CD4-positive, alpha-beta T cell (primary cell): ENCODE measurements at regions of chr14 and their contacts with region 1.

Region 1: GRCh38 chr14:24299255-24300195 is at the starts of genes DHRS1 and NOP9:
- DNase-seq: peak; percentile 86 to 98 (median 92)
- ATAC-seq: peak; percentile 77
- H3K4me3 ChIP-seq: peak within 1 kb of the TSS; percentile 87
- H3K4me3 Mint-ChIP-seq: peak within 1 kb of the TSS; percentile 99
- H3K27ac ChIP-seq: peak within 1 kb of the TSS; percentile 81 to 87
- H3K27ac Mint-ChIP-seq: peak within 1 kb of the TSS; percentile 98
- H3K4me1 ChIP-seq: peaks cover 56% of the 10 kb centered on the region
- H3K4me1 Mint-ChIP-seq: peaks cover 64% of the 10 kb centered on the region
- H3K27me3 ChIP-seq: no peaks in the 10 kb centered on the region
- H3K27me3 Mint-ChIP-seq: no peaks in the 10 kb centered on the region
- CTCF ChIP-seq: no peak
- total RNA-seq, gene DHRS1: 21.5 to 23.5 TPM
- total RNA-seq, gene NOP9: 25.9 to 27.5 TPM

Region 2: DNA sequence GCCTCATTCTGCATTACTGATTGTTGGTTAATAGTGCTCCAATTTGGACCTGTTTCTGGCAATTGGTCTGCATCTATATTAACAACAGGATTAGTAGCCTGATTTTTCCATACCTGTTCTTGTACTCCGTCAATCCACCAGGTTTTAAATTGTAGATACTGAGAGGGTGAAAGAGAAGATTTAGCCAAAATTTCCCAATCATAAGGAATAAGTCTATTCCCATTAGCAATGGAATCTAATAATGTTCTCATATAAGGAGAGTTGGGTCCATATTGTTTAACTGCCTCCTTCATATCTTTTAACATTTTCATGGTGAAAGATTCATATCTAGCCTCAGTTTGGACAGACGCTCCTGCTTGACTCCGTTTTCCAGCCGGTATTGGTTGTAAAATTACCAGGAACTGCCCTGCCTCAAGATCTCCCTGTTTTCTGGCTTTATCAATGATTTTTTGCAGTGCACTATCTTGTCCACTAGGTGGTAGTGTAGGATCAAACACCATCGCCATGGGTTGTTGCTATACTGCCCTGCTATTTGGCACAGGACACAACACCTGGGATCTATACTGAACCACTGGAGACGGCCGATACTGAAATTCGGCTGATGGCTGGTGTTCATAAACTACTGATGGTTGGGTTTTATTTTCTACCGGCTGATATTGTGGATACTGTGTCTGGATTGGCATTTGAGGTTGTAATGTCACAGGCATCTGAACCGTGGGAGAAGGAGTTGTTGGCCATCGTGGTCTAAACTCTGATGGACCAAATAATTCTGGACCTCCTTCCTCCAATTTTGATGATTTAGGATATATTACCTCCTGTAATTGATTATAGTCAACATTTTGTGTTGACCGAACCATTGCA is 285.6 kb before region 1 on chr14:
- CTCF ChIA-PET with region 1: no interaction called
- POLR2A ChIA-PET with region 1: no interaction called
- intact Hi-C with region 1: loop called (anchors 1 to 5 kb)
- DNase-seq: peak in 12 of 14 experiments; percentile 9 to 85 (median 32)
- ATAC-seq: peak; percentile 98
- H3K4me3 ChIP-seq: no peak overlapping the region
- H3K4me3 Mint-ChIP-seq: no peak overlapping the region
- H3K27ac ChIP-seq: no peak overlapping the region
- H3K27ac Mint-ChIP-seq: no peak overlapping the region
- H3K4me1 ChIP-seq: peaks cover 11% of the 10 kb centered on the region
- H3K4me1 Mint-ChIP-seq: peaks cover 25% of the 10 kb centered on the region
- H3K27me3 ChIP-seq: no peaks in the 10 kb centered on the region
- H3K27me3 Mint-ChIP-seq: no peaks in the 10 kb centered on the region
- CTCF ChIP-seq: peak; percentile 92

Region 3: DNA sequence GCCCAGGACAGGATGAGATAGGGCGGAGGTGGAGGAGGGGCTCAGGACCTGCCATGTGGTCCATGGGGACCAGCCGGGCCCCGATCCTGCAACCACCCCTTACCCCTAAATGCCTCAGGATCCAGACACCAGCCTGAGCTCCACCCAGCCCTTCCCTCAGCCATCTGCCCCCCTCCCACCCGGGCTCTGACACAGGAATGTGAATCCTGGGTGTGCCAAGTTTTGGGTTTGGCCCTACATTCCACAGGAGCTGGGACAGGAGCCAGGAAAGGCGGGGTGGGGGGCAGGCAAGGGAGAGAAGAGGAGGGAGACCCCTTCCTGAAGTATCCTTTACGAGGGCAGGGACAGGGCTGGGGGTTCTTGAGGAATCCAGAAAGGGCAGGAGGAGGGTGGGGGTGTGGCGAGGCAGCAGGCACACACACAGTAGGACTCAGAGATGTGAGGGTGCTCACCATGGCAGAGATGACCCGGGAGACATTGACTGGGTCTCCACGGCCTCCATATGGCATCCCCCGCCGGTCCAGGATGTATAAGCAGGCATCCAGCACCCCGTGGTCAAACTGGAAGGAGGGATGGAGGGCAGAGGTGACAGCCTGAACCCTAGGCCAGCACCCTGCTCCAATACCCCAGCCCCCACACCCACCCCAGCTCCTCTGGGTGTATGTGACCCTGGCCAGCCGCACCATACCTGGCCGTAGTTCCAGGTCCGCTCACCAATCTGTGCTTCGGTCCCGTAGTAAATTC is 40.1 kb before region 1 on chr14:
- CTCF ChIA-PET with region 1: no interaction called
- POLR2A ChIA-PET with region 1: no interaction called
- intact Hi-C with region 1: no loop called
- DNase-seq: no peak
- ATAC-seq: no peak
- H3K4me3 ChIP-seq: no peak overlapping the region
- H3K4me3 Mint-ChIP-seq: no peak overlapping the region
- H3K27ac ChIP-seq: no peak overlapping the region
- H3K27ac Mint-ChIP-seq: no peak overlapping the region
- H3K4me1 ChIP-seq: no peaks in the 10 kb centered on the region
- H3K4me1 Mint-ChIP-seq: no peaks in the 10 kb centered on the region
- H3K27me3 ChIP-seq: no peaks in the 10 kb centered on the region
- H3K27me3 Mint-ChIP-seq: no peaks in the 10 kb centered on the region
- CTCF ChIP-seq: no peak

Region 4: DNA sequence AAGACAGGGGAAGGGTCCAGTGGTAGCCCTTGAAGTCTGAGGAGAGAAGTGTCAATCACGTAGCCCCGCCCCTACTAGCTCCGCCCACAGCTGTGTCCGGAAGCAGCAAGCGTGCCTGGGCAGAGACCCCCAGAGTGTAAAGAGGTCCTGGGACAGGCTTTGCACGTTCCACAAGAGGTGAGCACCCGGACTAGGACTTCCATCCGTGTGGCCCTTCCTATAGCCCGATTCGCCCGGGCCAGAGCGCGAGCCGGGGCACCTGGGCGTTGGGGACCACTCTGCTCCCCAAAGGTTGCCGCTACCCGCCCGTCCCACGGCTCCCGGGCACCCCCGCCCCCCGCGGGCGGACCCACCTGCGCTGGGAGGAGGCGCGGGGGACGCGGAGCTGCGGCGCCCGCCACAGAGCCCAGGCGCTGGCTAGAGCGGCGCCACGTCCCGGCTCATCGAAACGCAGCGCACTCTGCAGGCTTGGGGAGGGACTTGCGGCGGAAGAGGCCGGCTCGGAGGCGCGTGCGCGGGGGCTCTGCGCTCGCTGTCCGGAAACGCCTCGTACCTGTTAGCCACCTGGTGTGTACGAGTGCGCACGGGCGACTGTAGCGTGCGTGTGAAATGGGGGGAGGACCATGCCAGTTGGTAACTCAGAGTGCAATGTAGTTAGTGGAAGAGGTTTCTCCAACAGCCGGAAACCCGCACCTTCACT is 28.2 kb before region 1 on chr14 and contains the start of gene RABGGTA:
- CTCF ChIA-PET with region 1: interaction called, 18 read pairs
- POLR2A ChIA-PET with region 1: interaction called, 22 read pairs
- intact Hi-C with region 1: loop called (anchors 1 kb)
- DNase-seq: peak; percentile 84 to 99 (median 92)
- ATAC-seq: peak; percentile 83
- H3K4me3 ChIP-seq: peak within 1 kb of the TSS; percentile 86
- H3K4me3 Mint-ChIP-seq: peak within 1 kb of the TSS; percentile 96
- H3K27ac ChIP-seq: peak within 1 kb of the TSS; percentile 92 to 95
- H3K27ac Mint-ChIP-seq: peak within 1 kb of the TSS; percentile 97
- H3K4me1 ChIP-seq: peaks cover 43% of the 10 kb centered on the region
- H3K4me1 Mint-ChIP-seq: peaks cover 40% of the 10 kb centered on the region
- H3K27me3 ChIP-seq: no peaks in the 10 kb centered on the region
- H3K27me3 Mint-ChIP-seq: no peaks in the 10 kb centered on the region
- CTCF ChIP-seq: peak; percentile 75
- total RNA-seq, gene RABGGTA: 52.3 to 55.2 TPM

Region 5: DNA sequence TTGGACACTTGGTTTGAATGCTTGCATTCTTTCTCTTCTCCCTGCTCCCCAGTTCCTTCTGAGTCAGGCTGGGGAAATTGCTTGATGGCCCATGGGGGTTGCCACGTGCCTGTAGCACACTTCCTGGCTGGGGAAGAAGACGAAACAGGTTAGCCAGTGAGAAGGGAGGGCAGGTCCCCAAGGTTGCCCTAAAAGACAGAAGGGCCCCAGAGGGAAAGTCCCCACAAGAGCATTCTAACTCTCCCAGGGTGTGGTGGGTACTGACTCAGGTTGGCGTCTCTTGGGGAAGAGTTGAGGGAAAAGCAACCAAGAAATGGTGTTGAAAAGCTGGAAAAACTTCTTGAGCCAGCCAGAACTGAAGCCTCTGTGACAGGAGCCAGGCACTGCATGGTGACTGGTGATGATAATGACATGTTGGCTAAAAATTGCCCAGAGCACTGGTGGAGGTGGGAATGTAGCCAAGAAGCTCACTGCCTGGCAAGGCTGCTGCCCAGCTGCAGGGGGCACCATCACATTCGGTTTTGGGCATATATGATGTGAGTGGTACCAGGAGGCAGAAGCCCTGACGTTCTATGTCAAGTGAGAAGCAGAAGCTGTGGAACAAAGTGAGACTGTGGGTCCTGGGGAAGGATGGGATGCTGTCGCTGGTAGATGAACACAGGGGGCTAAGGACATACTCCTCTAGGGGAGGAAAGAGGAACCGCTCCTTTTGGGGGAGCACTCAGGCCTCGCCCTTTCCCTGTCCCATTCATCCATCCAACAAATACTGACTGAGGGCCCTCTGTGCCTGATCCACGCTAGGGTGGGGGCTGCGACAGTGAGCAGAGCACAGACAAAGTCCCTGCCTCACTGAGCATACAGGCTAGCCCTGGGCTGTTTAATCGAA is 20.0 kb before region 1 on chr14:
- CTCF ChIA-PET with region 1: interaction called, 24 read pairs
- POLR2A ChIA-PET with region 1: interaction called, 3 read pairs
- intact Hi-C with region 1: loop called in 1 of 2 experiments (anchors 1 kb)
- DNase-seq: peak in 12 of 14 experiments; percentile 23 to 87 (median 40)
- ATAC-seq: peak; percentile 84
- H3K4me3 ChIP-seq: no peak overlapping the region
- H3K4me3 Mint-ChIP-seq: no peak overlapping the region
- H3K27ac ChIP-seq: peak overlapping the region in 1 of 2 donors; percentile 33
- H3K27ac Mint-ChIP-seq: peak overlapping the region; percentile 81
- H3K4me1 ChIP-seq: peaks cover 38% of the 10 kb centered on the region
- H3K4me1 Mint-ChIP-seq: peaks cover 33% of the 10 kb centered on the region
- H3K27me3 ChIP-seq: no peaks in the 10 kb centered on the region
- H3K27me3 Mint-ChIP-seq: no peaks in the 10 kb centered on the region
- CTCF ChIP-seq: no peak

Region 6: GRCh38 chr14:24310646-24311604 is 11.4 kb after region 1 on chr14 and contains the start of gene LTB4R:
- CTCF ChIA-PET with region 1: interaction called, 67 read pairs
- POLR2A ChIA-PET with region 1: interaction called, 39 read pairs
- intact Hi-C with region 1: no loop called
- DNase-seq: peak; percentile 47 to 91 (median 61)
- ATAC-seq: peak; percentile 81
- H3K4me3 ChIP-seq: peak within 1 kb of the TSS; percentile 65
- H3K4me3 Mint-ChIP-seq: peak within 1 kb of the TSS; percentile 88
- H3K27ac ChIP-seq: peak within 1 kb of the TSS; percentile 59 to 73
- H3K27ac Mint-ChIP-seq: peak within 1 kb of the TSS; percentile 76
- H3K4me1 ChIP-seq: peaks cover 80% of the 10 kb centered on the region
- H3K4me1 Mint-ChIP-seq: peaks cover 80% of the 10 kb centered on the region
- H3K27me3 ChIP-seq: no peaks in the 10 kb centered on the region
- H3K27me3 Mint-ChIP-seq: no peaks in the 10 kb centered on the region
- CTCF ChIP-seq: peak; percentile 45
- total RNA-seq, gene LTB4R: 15.6 to 18.3 TPM